ENCODE measurements at regions of chr22 and their contacts with region 1.

Region 1: DNA sequence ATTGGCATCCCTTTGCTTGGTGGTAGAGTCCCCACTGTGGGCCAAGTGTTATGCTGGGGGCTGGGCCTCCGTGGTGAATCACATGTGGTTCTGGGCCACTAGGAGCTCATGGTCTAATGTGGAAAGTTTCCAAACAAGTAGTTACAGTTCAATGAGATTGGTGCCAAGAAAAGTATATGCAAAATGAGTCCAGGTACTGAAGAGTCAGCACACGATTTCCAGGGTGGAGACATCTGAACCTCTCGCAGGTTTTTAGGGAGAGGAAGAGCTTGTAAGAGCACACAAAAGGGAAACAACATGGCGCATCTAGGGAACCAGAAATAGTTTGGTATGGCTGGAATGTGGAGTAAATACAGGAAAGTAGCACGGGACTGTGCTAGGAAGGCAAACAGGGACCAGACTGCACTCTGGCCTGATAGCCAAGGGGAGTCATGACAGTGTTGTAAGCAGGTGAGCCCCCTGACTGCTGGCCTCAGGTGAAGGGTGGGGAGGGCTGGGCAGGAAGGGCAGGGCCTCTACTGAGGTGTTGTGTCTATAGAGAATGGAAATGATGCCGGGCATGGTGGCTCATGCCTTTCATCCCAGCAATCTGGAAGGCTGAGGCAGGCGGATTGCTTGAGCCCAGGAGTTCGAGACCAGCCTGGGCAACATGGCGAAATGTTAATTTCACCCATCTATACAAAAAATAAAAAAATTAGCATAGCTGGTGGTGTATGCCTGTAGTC is 12.6 kb downstream of the POLR2F start:
- DNase-seq: no peak
- H3K4me3 ChIP-seq: no peak overlapping the region
- H3K27ac ChIP-seq: no peak overlapping the region
- H3K4me1 ChIP-seq: no peaks in the 10 kb centered on the region
- H3K27me3 ChIP-seq: no peaks in the 10 kb centered on the region
- CTCF ChIP-seq: no peak

Region 2: DNA sequence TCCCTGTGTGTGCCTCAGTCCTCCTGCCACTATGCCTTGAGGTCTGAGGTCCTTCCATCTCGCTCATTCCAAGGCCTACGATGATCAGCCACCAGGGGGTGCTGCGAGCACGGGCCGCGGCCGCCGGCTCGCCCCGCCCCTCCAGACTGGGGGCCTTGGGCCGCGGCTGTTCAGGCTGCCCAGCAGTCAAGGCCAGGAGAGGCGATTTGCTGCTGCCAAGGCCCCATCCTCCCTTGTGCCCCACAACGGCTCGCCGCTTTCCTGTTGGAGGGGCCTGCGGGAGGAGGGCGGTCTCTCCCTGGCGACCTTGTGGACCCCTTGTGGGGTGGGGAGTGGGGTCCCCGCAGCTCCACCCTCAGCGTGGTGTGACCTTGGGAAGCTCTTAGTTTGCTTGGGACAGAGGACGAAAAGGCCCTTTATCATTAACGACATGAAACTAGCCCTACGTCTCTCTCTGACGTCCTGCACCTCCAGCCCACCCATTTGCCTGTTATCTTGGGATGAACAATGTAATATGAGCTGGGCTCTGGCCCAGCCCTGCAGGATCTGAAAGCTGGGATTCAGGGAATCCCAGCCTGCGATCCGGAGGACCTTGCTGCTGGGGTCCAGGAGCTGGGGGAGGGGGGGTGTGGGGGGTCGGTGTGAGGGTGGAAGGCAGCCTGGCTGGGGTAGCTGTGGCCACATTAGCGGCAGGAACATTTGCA is 148.2 kb before region 1 on chr22:
- CTCF ChIA-PET with region 1: interaction called, 6 read pairs
- POLR2A ChIA-PET with region 1: no interaction called
- intact Hi-C with region 1: loop called (anchors 1 kb)
- DNase-seq: peak; percentile 81
- H3K4me3 ChIP-seq: peak overlapping the region; percentile 34
- H3K27ac ChIP-seq: peak overlapping the region; percentile 38
- H3K4me1 ChIP-seq: peaks cover 15% of the 10 kb centered on the region
- H3K27me3 ChIP-seq: no peaks in the 10 kb centered on the region
- CTCF ChIP-seq: peak; percentile 90

Region 3: GRCh38 chr22:37893583-37893983 is 72.5 kb before region 1 on chr22:
- CTCF ChIA-PET with region 1: interaction called, 12 read pairs
- POLR2A ChIA-PET with region 1: no interaction called
- intact Hi-C with region 1: no loop called
- DNase-seq: no peak
- H3K4me3 ChIP-seq: no peak overlapping the region
- H3K27ac ChIP-seq: no peak overlapping the region
- H3K4me1 ChIP-seq: no peaks in the 10 kb centered on the region
- H3K27me3 ChIP-seq: no peaks in the 10 kb centered on the region
- CTCF ChIP-seq: no peak